CD8-positive, alpha-beta memory T cell (primary cell): ENCODE measurements at regions of chr6 and their contacts with region 1.

Region 1: DNA sequence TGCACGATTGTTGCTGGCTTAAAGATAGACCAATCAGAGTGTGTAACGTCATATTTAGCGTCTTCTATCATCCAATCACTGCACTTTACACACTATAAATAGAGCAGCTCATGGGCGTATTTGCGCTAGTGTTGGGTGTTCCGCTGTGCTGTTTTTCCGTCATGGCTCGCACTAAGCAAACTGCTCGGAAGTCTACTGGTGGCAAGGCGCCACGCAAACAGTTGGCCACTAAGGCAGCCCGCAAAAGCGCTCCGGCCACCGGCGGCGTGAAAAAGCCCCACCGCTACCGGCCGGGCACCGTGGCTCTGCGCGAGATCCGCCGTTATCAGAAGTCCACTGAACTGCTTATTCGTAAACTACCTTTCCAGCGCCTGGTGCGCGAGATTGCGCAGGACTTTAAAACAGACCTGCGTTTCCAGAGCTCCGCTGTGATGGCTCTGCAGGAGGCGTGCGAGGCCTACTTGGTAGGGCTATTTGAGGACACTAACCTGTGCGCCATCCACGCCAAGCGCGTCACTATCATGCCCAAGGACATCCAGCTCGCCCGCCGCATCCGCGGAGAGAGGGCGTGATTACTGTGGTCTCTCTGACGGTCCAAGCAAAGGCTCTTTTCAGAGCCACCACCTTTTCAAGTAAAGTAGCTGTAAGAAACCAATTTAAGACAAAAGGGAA is 57.9 kb downstream of the TRIM38 start:
- DNase-seq: peak; percentile 68 to 92 (median 88)
- H3K4me3 ChIP-seq: peak overlapping the region; percentile 93
- H3K4me3 Mint-ChIP-seq: peak overlapping the region; percentile 81 to 99 (median 95)
- H3K27ac ChIP-seq: peak overlapping the region; percentile 98
- H3K27ac Mint-ChIP-seq: peak overlapping the region; percentile 93 to 100 (median 100)
- H3K4me1 ChIP-seq: peaks cover 14% of the 10 kb centered on the region
- H3K4me1 Mint-ChIP-seq: peaks cover 30 to 57% (median 44%) of the 10 kb centered on the region in 3 donors
- H3K27me3 ChIP-seq: no peaks in the 10 kb centered on the region
- H3K27me3 Mint-ChIP-seq: peaks cover 0 to 12% of the 10 kb centered on the region in 2 donors

Region 2: GRCh38 chr6:26003102-26003694 is 17.3 kb before region 1 on chr6:
- CTCF ChIA-PET with region 1: interaction called, 35 read pairs
- POLR2A ChIA-PET with region 1: interaction called, 7 read pairs
- DNase-seq: peak; percentile 17 to 65 (median 28)
- H3K4me3 ChIP-seq: no peak overlapping the region
- H3K4me3 Mint-ChIP-seq: no peak overlapping the region
- H3K27ac ChIP-seq: no peak overlapping the region
- H3K27ac Mint-ChIP-seq: no peak overlapping the region
- H3K4me1 ChIP-seq: no peaks in the 10 kb centered on the region
- H3K4me1 Mint-ChIP-seq: peaks cover 0 to 8% (median 0%) of the 10 kb centered on the region in 3 donors
- H3K27me3 ChIP-seq: no peaks in the 10 kb centered on the region
- H3K27me3 Mint-ChIP-seq: no peaks in the 10 kb centered on the region

Region 3: GRCh38 chr6:26045065-26045927 is 24.8 kb after region 1 on chr6:
- CTCF ChIA-PET with region 1: interaction called, 173 read pairs
- POLR2A ChIA-PET with region 1: interaction called, 326 read pairs
- DNase-seq: peak; percentile 58 to 90 (median 85)
- H3K4me3 ChIP-seq: peak overlapping the region; percentile 77
- H3K4me3 Mint-ChIP-seq: peak overlapping the region; percentile 87 to 94 (median 92)
- H3K27ac ChIP-seq: peak overlapping the region; percentile 71
- H3K27ac Mint-ChIP-seq: peak overlapping the region; percentile 94 to 99 (median 98)
- H3K4me1 ChIP-seq: peaks cover 10% of the 10 kb centered on the region
- H3K4me1 Mint-ChIP-seq: peaks cover 20 to 32% (median 30%) of the 10 kb centered on the region in 3 donors
- H3K27me3 ChIP-seq: no peaks in the 10 kb centered on the region
- H3K27me3 Mint-ChIP-seq: no peaks in the 10 kb centered on the region

Region 4: DNA sequence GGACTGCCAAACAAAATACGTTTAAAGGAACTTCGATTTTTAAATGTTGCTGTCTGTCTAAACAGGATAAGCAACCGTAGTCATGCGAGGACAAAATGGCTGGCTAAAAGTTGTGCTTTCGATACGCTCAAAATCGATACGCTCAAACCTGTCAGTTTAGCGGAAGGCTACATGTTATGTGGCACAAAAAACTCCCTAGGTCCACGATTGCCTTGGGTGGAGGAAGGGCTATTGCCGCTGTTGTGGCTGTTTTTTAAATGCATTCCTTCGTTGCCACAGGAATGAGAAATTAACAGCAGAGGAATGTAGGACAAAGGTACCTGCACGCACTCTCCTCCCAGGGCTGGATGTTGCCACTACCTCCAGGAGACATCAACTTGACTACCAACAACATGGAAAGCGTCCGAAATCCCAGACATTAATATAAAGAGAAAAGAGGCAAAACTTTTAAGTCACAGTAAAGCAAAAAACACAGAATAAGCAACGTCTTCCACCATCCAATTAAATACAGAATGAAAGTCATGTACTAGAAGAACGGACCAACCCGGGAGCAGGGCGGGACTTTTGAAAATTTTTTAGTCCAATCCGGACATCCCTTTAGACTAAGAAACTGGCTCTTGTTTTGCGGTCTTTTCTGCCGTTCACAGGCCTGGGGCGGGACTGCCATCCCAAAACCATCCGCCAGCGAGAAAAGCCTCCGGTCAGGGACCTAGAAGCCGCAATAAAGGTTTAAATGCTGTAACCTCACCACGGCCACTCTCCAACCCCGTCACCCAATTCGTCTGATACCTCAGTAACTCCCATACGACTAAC is 34.6 kb after region 1 on chr6:
- CTCF ChIA-PET with region 1: interaction called, 12 read pairs
- POLR2A ChIA-PET with region 1: interaction called, 34 read pairs
- DNase-seq: peak; percentile 74 to 89 (median 86)
- H3K4me3 ChIP-seq: peak overlapping the region; percentile 92
- H3K4me3 Mint-ChIP-seq: peak overlapping the region; percentile 90 to 97 (median 94)
- H3K27ac ChIP-seq: peak overlapping the region; percentile 96
- H3K27ac Mint-ChIP-seq: peak overlapping the region; percentile 90 to 99 (median 97)
- H3K4me1 ChIP-seq: peaks cover 9% of the 10 kb centered on the region
- H3K4me1 Mint-ChIP-seq: peaks cover 17 to 30% (median 26%) of the 10 kb centered on the region in 3 donors
- H3K27me3 ChIP-seq: no peaks in the 10 kb centered on the region
- H3K27me3 Mint-ChIP-seq: peaks cover 0 to 4% of the 10 kb centered on the region in 2 donors